ENCODE measurements at regions of chr16 and their contacts with region 1.

Region 1: DNA sequence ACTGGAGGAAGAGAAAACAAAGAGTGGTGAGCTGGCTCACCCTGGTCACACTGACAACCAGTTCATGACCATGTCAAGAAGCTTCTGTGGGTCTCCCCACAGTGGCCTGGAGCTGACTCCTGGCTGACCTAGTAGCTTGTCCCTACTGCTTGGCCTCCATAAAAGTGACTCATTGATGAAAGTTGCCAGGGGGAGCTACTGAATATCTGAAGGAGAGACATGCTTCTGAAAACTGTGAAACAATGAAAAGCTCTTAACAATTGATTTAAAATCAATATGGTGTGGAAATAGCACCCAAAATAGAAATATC is 22.0 kb downstream of the SMPD3 start:
- DNase-seq: no peak
- H3K4me3 ChIP-seq: no peak overlapping the region
- H3K27ac ChIP-seq: no peak overlapping the region
- H3K4me1 ChIP-seq: peaks cover 0 to 5% (median 0%) of the 10 kb centered on the region in 4 experiments; a peak in 1 of 7 replicates
- H3K27me3 ChIP-seq: peaks cover 0 to 2% (median 0%) of the 10 kb centered on the region in 4 experiments; a peak in 2 of 7 replicates
- CTCF ChIP-seq: no peak
- EP300 ChIP-seq: no peak
- POLR2A ChIP-seq: no peak
- RAD21 ChIP-seq: no peak

Region 2: GRCh38 chr16:68436581-68436980 is 10.3 kb after region 1 on chr16:
- CTCF ChIA-PET with region 1: interaction called, 54 read pairs
- POLR2A ChIA-PET with region 1: interaction called, 3 read pairs
- DNase-seq: peak in 1 of 2 experiments; percentile 65
- H3K4me3 ChIP-seq: no peak overlapping the region
- H3K27ac ChIP-seq: no peak overlapping the region
- H3K4me1 ChIP-seq: peaks cover 0 to 3% (median 0%) of the 10 kb centered on the region in 4 experiments; a peak in 1 of 7 replicates
- H3K27me3 ChIP-seq: no peaks in the 10 kb centered on the region; a peak in 1 of 7 replicates
- CTCF ChIP-seq: peak; percentile 51 to 65 (median 58)
- EP300 ChIP-seq: no peak
- POLR2A ChIP-seq: no peak
- RAD21 ChIP-seq: peak; percentile 34 to 51

Region 3: DNA sequence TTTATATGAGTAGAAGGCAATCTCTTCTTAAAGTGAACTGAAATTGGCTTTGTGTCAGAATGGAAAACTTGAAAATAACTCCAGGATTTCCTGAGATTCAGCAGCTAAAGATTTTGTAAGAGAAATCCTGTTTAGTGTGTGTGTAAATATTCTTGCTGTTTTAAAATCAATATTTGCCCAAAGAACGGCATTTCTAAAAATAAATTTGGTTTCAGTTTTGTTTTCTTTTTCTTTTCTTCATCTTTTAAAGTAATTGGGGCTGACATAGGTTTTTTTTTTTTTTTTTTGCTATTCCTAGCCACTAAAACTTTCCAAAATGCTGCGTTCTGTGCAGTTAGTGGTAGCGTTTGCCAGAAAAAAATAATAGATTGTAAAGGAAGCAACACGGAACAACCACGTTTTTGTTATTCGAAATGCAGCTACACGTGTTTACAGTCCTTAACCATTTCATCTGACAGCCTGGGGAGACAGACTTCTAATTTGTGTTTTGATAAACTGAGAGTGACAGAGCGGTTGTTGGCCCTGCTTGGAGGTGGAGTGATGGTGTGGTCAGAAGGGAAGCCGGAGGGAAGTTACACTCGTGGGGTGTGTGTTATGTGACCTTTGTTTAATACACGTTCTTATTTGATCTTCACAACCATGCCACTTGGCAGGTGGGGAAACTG is 43.6 kb after region 1 on chr16:
- CTCF ChIA-PET with region 1: no interaction called
- POLR2A ChIA-PET with region 1: no interaction called
- DNase-seq: no peak
- H3K4me3 ChIP-seq: no peak overlapping the region
- H3K27ac ChIP-seq: no peak overlapping the region
- H3K4me1 ChIP-seq: 0 out of 7 replicates have a peak, but pooled peaks cover 0 to 2% (median 0%) of the 10 kb centered on the region in 4 experiments
- H3K27me3 ChIP-seq: no peaks in the 10 kb centered on the region
- CTCF ChIP-seq: no peak
- EP300 ChIP-seq: no peak
- POLR2A ChIP-seq: no peak
- RAD21 ChIP-seq: no peak